Ovary (tissue), 10 donors: ENCODE measurements at regions of chr11 and their contacts with region 1.

Region 1: GRCh38 chr11:34051349-34052035 is at the start of gene CAPRIN1:
- DNase-seq: peak; percentile 83 to 91 (median 86)
- H3K4me3 ChIP-seq: peak within 1 kb of the TSS; percentile 97
- H3K27ac ChIP-seq: peak within 1 kb of the TSS; percentile 86 to 99
- H3K4me1 ChIP-seq: peaks cover 5% of the 10 kb centered on the region
- H3K27me3 ChIP-seq: no peaks in the 10 kb centered on the region
- CTCF ChIP-seq: peak in 1 of 3 donors; percentile 25
- EP300 ChIP-seq: no peak
- POLR2A ChIP-seq: peak; percentile 39
- total RNA-seq, gene CAPRIN1: 107 to 196 (median 160) TPM

Region 2: DNA sequence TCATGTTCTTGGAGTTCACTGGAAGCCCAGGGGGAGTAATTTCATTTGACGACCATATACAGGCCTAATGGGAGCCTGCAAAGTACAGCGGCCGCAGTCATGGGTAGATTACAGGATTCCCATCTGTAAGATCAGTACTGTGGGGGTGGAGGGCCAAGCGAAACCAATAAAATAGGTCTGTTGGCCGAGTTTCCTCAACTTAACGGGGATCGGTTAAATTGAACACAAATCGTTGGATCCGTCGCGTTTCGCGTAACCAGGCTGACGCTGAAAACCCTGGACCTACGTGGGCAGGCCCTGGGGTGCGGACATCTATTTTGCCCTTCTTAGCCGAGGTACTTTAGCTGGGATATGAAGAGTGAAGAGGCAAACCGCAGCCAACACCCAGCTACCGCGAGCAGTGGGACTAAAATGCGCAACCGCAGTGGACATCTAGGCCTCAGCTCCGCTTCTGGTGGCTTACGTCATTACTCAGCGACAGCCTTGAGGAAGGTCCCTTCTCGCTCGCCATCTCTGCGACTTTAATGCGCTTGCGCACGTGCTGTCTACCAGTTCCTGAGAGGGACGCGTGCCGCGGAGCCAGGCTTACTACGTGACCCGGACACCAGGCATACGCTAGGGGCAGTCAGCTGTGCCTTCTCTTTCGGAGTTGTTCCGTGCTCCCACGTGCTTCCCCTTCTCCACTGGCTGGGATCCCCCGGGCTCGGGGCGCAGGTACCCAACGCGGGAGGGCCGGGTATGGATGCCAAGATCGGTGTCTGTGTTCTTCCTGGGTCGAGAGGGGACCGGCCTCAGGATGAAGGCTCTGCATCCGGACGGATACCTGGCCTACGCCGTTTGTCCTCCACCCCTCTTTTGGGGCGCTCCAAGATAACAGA is 53.8 kb after region 1 on chr11 and contains the start of gene NAT10:
- intact Hi-C with region 1: loop called (anchors 5 to 10 kb)
- DNase-seq: peak; percentile 95 to 97 (median 96)
- H3K4me3 ChIP-seq: peak within 1 kb of the TSS; percentile 78
- H3K27ac ChIP-seq: peak within 1 kb of the TSS; percentile 45 to 85
- H3K4me1 ChIP-seq: peaks cover 4% of the 10 kb centered on the region
- H3K27me3 ChIP-seq: no peaks in the 10 kb centered on the region
- CTCF ChIP-seq: peak in 2 of 3 donors; percentile 15 to 21
- EP300 ChIP-seq: no peak
- POLR2A ChIP-seq: peak; percentile 77
- total RNA-seq, gene NAT10: 20.5 to 60.9 (median 49.1) TPM

Region 3: GRCh38 chr11:34274723-34275401 is 223.4 kb after region 1 on chr11:
- intact Hi-C with region 1: loop called in 1 of 4 experiments (anchors 10 kb)
- DNase-seq: peak; percentile 88 to 97 (median 92)
- H3K4me3 ChIP-seq: no peak overlapping the region
- H3K27ac ChIP-seq: peak overlapping the region in 1 of 2 donors; percentile 82
- H3K4me1 ChIP-seq: no peaks in the 10 kb centered on the region
- H3K27me3 ChIP-seq: no peaks in the 10 kb centered on the region
- CTCF ChIP-seq: no peak
- EP300 ChIP-seq: no peak
- POLR2A ChIP-seq: no peak

Region 4: DNA sequence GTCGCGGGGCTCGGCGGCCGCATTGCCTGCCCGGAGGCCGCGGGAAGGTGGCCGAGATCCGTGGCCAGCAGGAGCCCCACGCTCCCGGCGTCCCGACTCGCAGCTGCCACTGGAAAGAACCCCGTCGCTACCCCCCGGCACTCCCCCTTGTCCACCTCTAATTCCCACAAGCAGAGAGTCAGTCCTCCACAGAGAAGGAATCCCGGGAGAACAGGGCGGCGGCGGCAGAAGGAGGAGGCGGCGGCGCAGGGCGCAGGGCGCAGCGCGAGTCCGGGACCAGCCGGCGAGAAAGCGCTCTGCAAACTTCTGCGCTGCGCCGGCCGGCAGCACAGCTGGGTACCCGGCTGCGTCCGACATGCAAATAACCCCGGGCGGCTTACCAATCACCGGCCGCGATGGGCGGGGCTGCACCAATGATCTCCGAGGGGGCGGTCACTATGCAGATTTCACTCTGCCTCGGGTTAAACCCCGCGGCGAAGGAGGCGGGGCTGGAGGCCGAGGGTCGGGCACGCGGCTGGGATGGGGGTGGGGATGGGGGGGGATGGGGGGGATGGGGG is 306.3 kb after region 1 on chr11 and contains the start of gene ABTB2:
- intact Hi-C with region 1: loop called in 1 of 4 experiments (anchors 5 kb)
- DNase-seq: peak; percentile 98 to 99 (median 98)
- H3K4me3 ChIP-seq: peak within 1 kb of the TSS; percentile 63
- H3K27ac ChIP-seq: peak within 1 kb of the TSS; percentile 23 to 83
- H3K4me1 ChIP-seq: peaks cover 13% of the 10 kb centered on the region
- H3K27me3 ChIP-seq: no peaks in the 10 kb centered on the region
- CTCF ChIP-seq: peak in 1 of 3 donors; percentile 12
- EP300 ChIP-seq: no peak
- POLR2A ChIP-seq: peak; percentile 94
- total RNA-seq, gene ABTB2: 1.2 to 7.2 (median 2.6) TPM